ENCODE measurements at regions of chr19 and their contacts with region 1.

Region 1: GRCh38 chr19:28324275-28325060 is 888.5 kb downstream of the UQCRFS1 start:
- DNase-seq: no peak
- ATAC-seq: no peak
- H3K4me3 ChIP-seq: no peak overlapping the region
- H3K27ac ChIP-seq: no peak overlapping the region
- H3K4me1 ChIP-seq: no peaks in the 10 kb centered on the region
- H3K27me3 ChIP-seq: no peaks in the 10 kb centered on the region
- CTCF ChIP-seq: no peak
- POLR2A ChIP-seq: no peak

Region 2: GRCh38 chr19:27974082-27974513 is 350.4 kb before region 1 on chr19:
- intact Hi-C with region 1: loop called (anchors 5 kb)
- DNase-seq: peak; percentile 35 to 57 (median 42)
- ATAC-seq: peak; percentile 55
- H3K4me3 ChIP-seq: no peak overlapping the region
- H3K27ac ChIP-seq: no peak overlapping the region
- H3K4me1 ChIP-seq: no peaks in the 10 kb centered on the region
- H3K27me3 ChIP-seq: no peaks in the 10 kb centered on the region
- CTCF ChIP-seq: peak; percentile 15 to 78 (median 64)
- POLR2A ChIP-seq: no peak